ENCODE measurements at regions of chr5 and their contacts with region 1.

Region 1: DNA sequence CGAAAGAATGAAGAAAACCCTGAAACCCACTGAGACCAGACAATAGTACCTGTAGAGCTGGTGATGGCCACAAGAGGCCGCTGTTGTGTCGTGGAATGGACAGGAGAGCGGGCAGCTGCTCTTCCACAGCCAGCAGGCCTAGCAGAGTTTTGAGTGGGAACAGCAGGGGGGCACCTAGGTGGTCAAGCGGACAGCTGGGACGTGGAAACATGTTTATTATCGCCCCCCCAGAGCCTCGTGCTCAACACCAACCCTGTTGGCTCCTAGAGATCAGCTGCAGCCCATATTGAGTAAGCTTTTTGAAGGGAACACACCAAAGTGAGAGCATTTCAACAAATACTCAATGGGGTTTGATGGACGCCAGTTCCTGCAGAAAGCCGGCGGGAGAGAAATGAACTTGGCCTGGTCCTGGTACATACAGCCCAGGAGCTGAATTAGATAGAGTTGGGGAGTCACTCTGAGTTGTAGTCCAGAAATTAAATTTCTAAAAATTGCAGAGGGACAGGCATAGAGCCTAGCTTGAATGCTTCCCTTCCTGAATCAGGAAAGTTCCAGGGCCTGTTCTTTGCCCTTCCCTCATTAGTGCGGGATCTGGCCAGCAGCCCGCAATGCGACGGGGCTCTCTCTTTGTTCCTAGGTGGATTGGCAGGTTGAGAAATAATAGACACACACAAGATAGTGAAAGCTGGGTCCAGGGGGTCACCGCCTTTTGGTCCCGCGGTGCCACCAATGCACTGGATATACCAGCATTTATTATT is 33.8 kb downstream of the MFAP3 start:
- DNase-seq: peak; percentile 79 to 88 (median 86)
- ATAC-seq: peak; percentile 95
- H3K4me3 ChIP-seq: no peak overlapping the region
- H3K4me1 ChIP-seq: peaks cover 4% of the 10 kb centered on the region
- CTCF ChIP-seq: peak; percentile 70

Region 2: DNA sequence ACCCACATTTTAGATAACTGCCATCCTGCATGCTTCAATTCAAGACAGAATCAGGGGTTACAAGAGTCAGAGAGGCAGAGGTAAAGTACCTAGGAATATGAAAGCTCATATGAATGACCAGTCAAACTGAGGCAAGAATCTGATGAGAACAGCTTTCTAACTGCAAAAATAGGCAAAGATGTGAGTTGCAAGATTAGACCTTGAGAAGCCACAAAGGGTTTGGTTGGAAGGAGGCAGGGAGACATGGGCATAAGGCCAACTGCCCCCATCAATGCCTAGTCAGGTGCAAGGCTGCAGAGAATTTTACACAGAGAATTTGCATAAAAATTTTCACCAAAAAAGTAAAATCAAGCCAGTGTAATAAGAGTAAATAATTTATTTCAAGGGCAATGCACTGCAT is 46.6 kb before region 1 on chr5:
- intact Hi-C with region 1: no loop called
- DNase-seq: no peak
- ATAC-seq: no peak
- H3K4me3 ChIP-seq: no peak overlapping the region
- H3K4me1 ChIP-seq: no peaks in the 10 kb centered on the region
- CTCF ChIP-seq: no peak

Region 3: GRCh38 chr5:154179846-154180710 is 107.5 kb after region 1 on chr5:
- intact Hi-C with region 1: loop called (anchors 5 kb)
- DNase-seq: peak in 1 of 3 donors; percentile 40
- ATAC-seq: peak; percentile 88
- H3K4me3 ChIP-seq: no peak overlapping the region
- H3K4me1 ChIP-seq: no peaks in the 10 kb centered on the region
- CTCF ChIP-seq: peak; percentile 80

Region 4: DNA sequence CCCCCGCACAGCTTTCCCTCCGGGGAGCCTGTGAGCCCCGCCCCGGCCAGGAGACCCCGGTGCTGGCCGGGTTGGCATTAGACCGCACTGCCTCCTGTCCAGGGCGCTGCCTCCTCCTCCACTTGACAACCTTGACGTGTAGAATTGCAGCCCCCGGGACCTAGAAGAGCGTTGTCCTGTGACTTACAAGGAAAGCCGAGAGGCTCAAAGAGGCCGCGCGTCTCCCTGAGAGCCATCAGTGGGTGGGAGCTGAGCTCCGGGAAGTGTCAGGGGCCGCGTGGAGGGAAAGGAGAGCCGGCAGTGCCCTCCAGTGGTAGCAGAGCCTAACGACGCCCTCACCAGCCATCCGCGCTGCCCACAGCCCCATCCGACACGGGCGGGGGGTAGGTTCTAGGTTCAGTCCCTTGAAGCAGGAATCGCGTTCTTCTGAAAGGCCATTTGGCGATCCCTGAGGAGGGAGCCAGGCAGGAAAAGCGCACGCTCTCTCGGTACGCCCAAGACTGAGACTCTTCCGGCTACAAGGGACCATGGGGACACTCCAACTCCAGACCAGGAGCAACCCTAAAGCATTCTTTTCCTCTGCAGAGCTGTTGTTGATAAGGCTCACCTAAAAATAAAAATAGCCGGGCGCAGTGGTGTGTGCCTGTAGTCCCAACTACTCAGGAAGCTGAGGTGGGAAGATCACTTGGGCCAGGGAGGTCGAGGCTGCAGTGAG is 332.6 kb after region 1 on chr5:
- intact Hi-C with region 1: loop called (anchors 5 to 10 kb)
- DNase-seq: peak; percentile 79 to 82 (median 82)
- ATAC-seq: peak; percentile 97
- H3K4me3 ChIP-seq: no peak overlapping the region
- H3K4me1 ChIP-seq: peaks cover 8% of the 10 kb centered on the region
- CTCF ChIP-seq: peak; percentile 76

Measured in mucosa of descending colon (tissue), 3 donors.